ENCODE measurements at regions of chr7 and their contacts with region 1.

Region 1: DNA sequence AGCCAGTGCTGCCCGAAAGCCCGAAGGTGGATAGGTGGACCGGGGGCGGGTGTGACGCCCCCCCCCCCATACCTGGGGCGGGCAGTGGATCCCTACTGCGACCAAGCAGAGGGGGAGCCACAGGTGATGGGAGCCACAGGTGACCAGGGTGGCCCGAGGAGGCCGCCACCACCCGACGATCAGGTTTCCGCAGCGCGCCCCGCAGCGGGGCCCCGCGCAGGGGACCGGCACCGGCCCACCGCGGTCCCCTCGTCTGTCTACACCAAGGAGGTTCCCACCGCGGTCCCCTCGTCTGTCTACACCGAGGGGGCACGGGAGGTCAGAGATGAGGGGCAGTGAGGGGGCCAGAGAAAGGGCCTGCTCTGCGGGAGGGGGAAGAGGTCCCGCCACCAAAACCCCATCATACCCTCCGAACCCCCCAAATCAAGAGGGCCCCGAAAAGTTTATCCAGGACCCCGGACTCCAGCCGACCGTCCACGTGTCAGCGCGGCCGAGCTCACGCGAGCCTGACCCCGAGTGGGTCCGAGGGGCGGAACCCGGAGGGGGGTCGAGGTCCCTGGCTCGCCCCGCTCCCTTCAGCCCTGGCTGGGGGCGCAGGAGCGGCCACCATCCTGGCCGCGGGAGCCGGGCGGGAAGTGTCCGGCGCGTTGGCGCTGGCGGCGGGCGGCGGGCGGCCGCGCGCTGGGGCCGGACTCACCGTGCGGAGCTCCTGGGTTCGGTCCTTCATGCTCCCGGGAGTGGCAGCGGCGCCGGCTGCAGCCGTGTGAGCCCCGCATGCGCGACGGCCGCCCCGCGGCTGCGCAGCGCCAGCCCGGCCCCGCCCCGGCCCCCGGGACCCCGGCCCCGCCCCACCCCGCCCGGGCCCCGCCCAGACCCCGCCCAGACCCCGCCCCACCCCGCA is at the start of gene STX1A:
- DNase-seq: peak in 40 of 42 donors; percentile 47 to 85 (median 67)

Region 2: GRCh38 chr7:73578342-73579127 is 140.6 kb before region 1 on chr7 and contains the start of gene TBL2:
- intact Hi-C with region 1: loop called (anchors 10 kb)
- DNase-seq: peak; percentile 95 to 100 (median 99)

Region 3: GRCh38 chr7:73683056-73683964 is 35.8 kb before region 1 on chr7 and contains the starts of genes BUD23 and DNAJC30:
- intact Hi-C with region 1: loop called (anchors 5 kb)
- DNase-seq: peak; percentile 92 to 98 (median 95)

Region 4: DNA sequence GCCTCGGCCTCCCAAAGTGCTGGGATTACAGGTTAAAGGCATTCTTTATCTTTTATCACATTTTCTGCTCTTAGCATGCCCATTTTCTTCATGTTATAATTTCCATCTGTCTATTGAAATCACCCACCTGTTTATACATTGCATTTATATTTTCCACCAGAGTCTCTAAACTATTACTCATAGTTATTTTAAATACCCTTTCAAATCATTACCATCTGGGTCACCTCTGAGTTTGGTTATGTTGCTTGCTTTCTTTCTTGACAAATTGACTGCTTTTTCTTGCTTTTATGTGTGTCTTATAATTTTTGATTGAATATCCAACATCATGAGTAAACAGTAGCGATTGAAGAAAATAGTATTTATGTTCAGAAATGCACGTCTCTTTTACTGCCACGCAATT is 213.2 kb after region 1 on chr7:
- intact Hi-C with region 1: no loop called
- DNase-seq: no peak